Sigmoid colon (tissue), 7 donors: ENCODE measurements at regions of chr2 and their contacts with region 1.

Region 1: GRCh38 chr2:150234787-150235446 is 252.6 kb downstream of the RND3 start:
- DNase-seq: no peak
- H3K4me3 ChIP-seq: no peak overlapping the region
- H3K27ac ChIP-seq: peak overlapping the region in 1 of 4 donors; percentile 12
- H3K4me1 ChIP-seq: peaks cover 0 to 6% (median 0%) of the 10 kb centered on the region in 4 donors
- H3K27me3 ChIP-seq: no peaks in the 10 kb centered on the region
- CTCF ChIP-seq: no peak
- EP300 ChIP-seq: no peak
- POLR2A ChIP-seq: no peak

Region 2: DNA sequence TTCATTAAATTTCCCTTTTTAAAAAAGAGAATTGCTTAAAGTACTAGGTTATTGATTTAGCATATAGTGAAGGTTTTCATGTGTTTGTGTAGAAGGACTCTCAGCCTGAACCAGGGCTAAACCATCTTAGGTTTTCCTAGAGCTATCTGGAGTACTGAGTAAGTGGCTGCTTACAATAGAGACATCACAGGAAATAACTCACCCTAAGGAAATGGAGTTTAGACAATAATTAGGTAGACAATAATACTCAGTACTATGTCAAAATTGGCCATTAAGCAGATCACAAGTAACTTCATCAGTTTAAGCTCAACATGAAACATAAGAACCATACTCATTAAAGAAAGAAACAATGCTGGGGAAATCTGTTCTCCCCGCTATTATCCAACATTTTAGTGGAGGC is 12.6 kb after region 1 on chr2:
- intact Hi-C with region 1: loop called (anchors 1 kb)
- DNase-seq: no peak
- H3K4me3 ChIP-seq: no peak overlapping the region
- H3K27ac ChIP-seq: no peak overlapping the region
- H3K4me1 ChIP-seq: no peaks in the 10 kb centered on the region
- H3K27me3 ChIP-seq: no peaks in the 10 kb centered on the region
- CTCF ChIP-seq: no peak
- EP300 ChIP-seq: no peak
- POLR2A ChIP-seq: no peak

Region 3: GRCh38 chr2:150742094-150742493 is 507.2 kb after region 1 on chr2:
- intact Hi-C with region 1: no loop called
- DNase-seq: no peak
- H3K4me3 ChIP-seq: no peak overlapping the region
- H3K27ac ChIP-seq: no peak overlapping the region
- H3K4me1 ChIP-seq: no peaks in the 10 kb centered on the region
- H3K27me3 ChIP-seq: no peaks in the 10 kb centered on the region
- CTCF ChIP-seq: no peak
- EP300 ChIP-seq: no peak
- POLR2A ChIP-seq: no peak